Ascending aorta (tissue), 2 donors: ENCODE measurements at regions of chr16 and their contacts with region 1.

Region 1: DNA sequence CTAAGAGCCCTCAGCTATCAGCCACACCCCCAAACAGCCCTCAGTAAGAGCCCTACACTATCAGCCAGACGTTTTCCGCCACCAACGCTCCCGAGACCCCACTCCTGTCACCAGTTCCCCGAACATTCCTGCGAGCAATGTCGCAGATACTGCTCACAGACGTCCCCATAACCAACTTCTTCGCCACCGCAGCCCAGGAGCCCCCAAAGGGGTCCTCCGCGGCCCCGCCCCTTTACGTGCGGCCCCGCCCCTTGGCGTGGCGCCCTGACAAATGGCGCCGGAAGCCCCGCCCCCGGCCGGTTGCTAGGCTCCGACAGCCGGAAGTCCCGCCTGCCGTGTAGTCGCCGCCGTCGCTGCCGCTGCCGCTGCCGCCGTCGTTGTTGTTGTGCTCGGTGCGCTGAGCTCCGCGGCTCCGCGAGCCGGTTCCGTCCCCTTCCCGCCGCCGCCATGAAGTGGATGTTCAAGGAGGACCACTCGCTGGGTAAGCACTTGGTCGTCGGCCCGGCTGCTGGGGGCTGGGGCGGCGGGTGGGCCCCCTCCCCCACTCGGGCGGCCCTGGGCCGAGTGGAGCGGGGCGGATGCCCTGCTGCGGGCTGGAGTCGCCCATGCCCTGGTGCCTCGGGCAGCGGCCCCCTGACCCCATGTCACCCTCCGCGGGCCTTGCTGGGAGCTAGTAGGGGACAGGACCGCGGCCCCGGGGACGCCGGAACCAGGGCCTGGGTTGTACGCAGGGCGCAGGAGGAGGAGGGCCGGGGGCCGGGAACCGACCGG is at the start of gene GABARAPL2:
- DNase-seq: peak; percentile 23 to 90
- H3K4me3 ChIP-seq: peak within 1 kb of the TSS; percentile 93 to 96
- H3K27ac ChIP-seq: peak within 1 kb of the TSS; percentile 65 to 82
- H3K4me1 ChIP-seq: peaks cover 10 to 47% of the 10 kb centered on the region in 2 donors
- H3K27me3 ChIP-seq: no peaks in the 10 kb centered on the region
- CTCF ChIP-seq: no peak
- total RNA-seq, gene GABARAPL2: 56.1 TPM

Region 2: DNA sequence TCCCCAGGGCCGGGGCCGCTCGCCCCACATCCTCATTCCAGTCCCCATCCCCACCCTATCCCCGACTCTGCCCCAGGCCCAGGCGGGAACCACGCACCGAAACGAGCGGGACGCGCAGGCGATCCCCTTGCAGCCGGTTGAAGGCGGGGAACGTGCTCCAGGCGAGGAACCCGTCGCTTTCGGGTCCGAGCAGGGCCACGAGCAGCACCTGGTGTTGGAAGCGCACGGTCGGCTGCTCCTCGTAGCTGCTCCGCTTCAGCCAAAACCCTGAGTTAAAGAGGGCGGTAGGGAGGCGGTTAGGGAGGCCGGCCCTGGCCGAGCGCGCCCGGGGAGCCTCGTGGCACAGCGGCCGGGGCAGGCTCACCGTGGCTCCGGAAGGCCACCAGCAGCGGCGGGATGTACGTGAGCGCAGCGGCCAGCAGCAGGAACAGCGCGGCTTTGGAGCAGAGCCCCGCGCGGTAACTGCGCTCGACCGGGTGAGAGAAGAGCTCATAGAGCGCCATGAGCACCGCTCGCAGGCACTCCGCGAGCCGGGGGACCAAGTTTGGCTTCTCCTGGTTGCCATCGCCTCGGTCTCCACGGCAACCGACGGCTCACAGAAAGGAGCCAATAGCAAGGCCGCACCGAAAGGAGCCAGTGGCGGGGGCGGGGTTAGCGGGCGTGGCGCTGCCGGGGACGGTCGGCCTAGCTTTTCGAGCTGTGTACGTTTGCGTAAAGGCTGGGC is 10.4 kb before region 1 on chr16 and contains the start of gene TMEM231:
- intact Hi-C with region 1: loop called (anchors 1 kb)
- DNase-seq: peak; percentile 91 to 99
- H3K4me3 ChIP-seq: peak within 1 kb of the TSS; percentile 64 to 84
- H3K27ac ChIP-seq: peak within 1 kb of the TSS; percentile 63 to 80
- H3K4me1 ChIP-seq: peaks cover 0 to 5% of the 10 kb centered on the region in 2 donors
- H3K27me3 ChIP-seq: no peaks in the 10 kb centered on the region
- CTCF ChIP-seq: no peak
- total RNA-seq, gene TMEM231: 59.9 TPM

Region 3: GRCh38 chr16:75647492-75648264 is 81.5 kb after region 1 on chr16 and contains the starts of genes KARS1 and TERF2IP:
- intact Hi-C with region 1: loop called (anchors 5 kb)
- DNase-seq: peak; percentile 75 to 95
- H3K4me3 ChIP-seq: peak within 1 kb of the TSS; percentile 96 to 97
- H3K27ac ChIP-seq: peak within 1 kb of the TSS; percentile 96 to 97
- H3K4me1 ChIP-seq: peaks cover 9 to 32% of the 10 kb centered on the region in 2 donors
- H3K27me3 ChIP-seq: no peaks in the 10 kb centered on the region
- CTCF ChIP-seq: no peak
- total RNA-seq, gene KARS1: 65.2 TPM
- total RNA-seq, gene TERF2IP: 41.0 TPM

Region 4: DNA sequence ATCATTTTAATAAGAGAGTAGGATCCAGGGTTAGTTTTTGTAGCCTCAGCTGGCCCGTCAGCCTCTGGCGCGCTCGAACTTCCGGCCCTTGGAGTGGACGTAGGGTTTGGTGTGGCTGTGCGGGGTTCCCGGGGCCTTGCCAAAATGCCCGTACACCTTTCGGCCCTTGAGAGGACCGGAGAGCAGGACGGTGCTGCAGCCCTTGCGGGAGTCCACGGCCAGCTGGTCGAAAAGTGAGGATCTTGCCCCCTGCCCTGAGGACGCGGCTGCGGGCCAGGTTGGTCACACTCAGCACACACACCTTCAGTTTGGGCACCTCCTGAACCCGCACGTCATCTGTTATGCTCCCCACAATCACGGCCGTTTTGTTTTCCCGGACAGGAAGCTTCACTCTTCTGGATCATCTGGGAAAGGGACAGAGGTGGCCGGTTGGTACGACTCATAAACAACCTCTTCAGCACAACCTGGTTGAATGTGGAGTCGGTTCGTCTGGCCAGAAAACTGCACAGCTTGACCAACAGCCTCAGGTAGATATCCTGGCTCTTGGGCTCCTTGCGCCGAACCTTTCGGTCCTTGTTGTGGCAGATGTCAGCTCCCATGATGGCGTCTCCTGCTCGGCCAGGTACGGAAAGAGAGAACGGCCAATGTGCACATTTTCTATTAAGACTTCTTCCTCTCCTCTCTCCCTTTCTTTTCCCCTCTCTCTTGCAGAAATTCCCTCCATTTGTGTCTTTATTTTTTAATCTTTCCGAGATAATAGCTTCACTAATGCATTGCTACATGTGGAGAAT is 669.0 kb after region 1 on chr16:
- intact Hi-C with region 1: no loop called
- DNase-seq: no peak
- H3K4me3 ChIP-seq: no peak overlapping the region
- H3K27ac ChIP-seq: no peak overlapping the region
- H3K4me1 ChIP-seq: no peaks in the 10 kb centered on the region
- H3K27me3 ChIP-seq: no peaks in the 10 kb centered on the region
- CTCF ChIP-seq: no peak